Tibial artery (tissue), 4 donors: ENCODE measurements at regions of chr1 and their contacts with region 1.

Region 1: GRCh38 chr1:46036894-46037839 is 95.3 kb downstream of the PIK3R3 start:
- DNase-seq: peak; percentile 89 to 91
- H3K4me3 ChIP-seq: no peak overlapping the region
- H3K27ac ChIP-seq: peak overlapping the region in 1 of 2 donors; percentile 22
- H3K4me1 ChIP-seq: peaks cover 0 to 12% (median 0%) of the 10 kb centered on the region in 4 donors
- H3K27me3 ChIP-seq: no peaks in the 10 kb centered on the region
- CTCF ChIP-seq: peak; percentile 98

Region 2: DNA sequence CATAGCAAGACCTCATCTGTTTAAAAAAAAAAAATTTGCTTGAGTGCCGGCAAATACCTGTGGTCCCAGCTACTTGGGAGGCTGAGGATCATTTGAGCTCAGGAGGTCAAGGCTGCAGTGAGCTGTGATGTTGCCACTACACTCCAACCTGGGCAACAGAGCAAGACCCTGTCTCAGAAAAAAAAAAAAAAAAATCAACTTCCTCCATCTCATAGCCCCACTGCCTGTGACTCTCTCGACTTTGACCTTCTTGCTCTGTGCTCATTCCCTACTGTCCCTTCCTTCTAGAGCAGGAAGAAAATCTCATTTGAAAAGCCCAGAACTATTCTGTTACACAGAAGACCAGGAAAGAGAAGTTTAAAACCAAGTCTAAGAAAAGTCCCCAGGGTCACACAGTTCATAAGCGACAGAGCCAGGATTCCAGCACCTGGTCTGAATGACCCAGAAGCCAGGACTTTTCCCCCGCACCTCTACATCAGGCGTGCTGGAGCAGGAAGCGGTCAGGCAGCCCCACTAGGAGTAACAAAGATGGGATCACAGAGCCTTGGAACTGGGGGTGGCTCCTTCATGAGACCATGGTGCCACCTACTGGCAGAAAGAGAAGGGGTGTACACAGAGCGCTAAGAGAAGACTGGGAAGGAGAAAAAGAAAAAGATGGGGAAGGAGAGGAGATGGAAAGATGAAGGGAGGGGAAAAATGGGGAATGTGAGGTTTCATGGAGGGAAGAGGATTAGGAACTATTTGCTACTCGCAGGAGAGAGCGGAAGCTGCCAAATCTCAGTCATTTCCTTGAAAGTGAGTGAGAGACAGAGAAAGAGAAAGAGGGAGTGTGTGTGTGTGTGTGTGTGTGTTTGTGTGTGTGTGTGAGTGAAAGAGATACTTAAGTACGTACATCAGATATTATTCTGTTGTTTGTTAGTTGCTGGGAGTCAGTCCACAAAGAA is 142.2 kb after region 1 on chr1:
- intact Hi-C with region 1: loop called (anchors 1 kb)
- DNase-seq: peak; percentile 89
- H3K4me3 ChIP-seq: no peak overlapping the region
- H3K27ac ChIP-seq: peak overlapping the region in 1 of 2 donors; percentile 33
- H3K4me1 ChIP-seq: peaks cover 0 to 47% (median 31%) of the 10 kb centered on the region in 4 donors
- H3K27me3 ChIP-seq: no peaks in the 10 kb centered on the region
- CTCF ChIP-seq: peak; percentile 91 to 93

Region 3: GRCh38 chr1:46224966-46225365 is 187.8 kb after region 1 on chr1:
- intact Hi-C with region 1: loop called (anchors 5 kb)
- DNase-seq: no peak
- H3K4me3 ChIP-seq: no peak overlapping the region
- H3K27ac ChIP-seq: no peak overlapping the region
- H3K4me1 ChIP-seq: peaks cover 0 to 3% (median 0%) of the 10 kb centered on the region in 4 donors
- H3K27me3 ChIP-seq: no peaks in the 10 kb centered on the region
- CTCF ChIP-seq: no peak